ENCODE measurements at regions of chr14 and their contacts with region 1.

Region 1: DNA sequence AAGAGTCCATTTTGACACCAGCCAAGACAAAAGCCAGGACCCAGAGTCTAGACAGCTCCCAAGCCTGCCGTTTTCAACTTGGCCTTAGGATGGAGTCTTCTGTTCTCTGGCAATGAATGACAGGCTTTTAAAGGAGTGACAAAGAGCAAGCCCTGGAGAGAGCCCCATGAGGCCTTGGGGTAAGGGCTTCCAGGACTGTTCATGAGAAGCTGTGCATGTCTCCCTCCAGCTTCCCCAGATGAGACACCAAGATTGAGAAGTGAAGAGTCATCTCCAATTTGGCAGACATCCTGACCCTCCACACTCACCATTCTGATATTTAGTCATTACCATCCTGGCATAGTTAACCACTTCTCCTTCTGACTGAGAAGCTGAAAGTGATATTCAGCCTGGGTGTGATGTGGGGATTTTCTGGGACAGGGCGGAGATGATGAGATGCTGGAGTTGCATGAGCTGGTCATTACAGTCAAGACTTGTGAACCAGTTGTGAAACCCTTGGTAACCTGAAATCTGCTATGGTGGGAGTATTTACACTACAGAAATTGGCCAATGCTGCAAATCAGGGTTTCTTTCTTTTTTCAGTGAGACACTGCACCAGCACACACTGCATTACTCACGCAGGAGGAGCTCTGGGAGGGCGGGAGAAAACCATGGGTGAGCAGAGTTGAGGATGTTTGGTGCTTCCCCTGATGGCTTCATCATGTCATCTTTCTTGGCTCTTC is 77.8 kb downstream of the VCPKMT start:
- DNase-seq: peak; percentile 88
- ATAC-seq: peak; percentile 82
- H3K4me3 Mint-ChIP-seq: peak overlapping the region; percentile 75
- H3K27ac Mint-ChIP-seq: peak overlapping the region; percentile 99
- H3K4me1 Mint-ChIP-seq: peaks cover 66% of the 10 kb centered on the region
- H3K27me3 Mint-ChIP-seq: no peaks in the 10 kb centered on the region

Region 2: DNA sequence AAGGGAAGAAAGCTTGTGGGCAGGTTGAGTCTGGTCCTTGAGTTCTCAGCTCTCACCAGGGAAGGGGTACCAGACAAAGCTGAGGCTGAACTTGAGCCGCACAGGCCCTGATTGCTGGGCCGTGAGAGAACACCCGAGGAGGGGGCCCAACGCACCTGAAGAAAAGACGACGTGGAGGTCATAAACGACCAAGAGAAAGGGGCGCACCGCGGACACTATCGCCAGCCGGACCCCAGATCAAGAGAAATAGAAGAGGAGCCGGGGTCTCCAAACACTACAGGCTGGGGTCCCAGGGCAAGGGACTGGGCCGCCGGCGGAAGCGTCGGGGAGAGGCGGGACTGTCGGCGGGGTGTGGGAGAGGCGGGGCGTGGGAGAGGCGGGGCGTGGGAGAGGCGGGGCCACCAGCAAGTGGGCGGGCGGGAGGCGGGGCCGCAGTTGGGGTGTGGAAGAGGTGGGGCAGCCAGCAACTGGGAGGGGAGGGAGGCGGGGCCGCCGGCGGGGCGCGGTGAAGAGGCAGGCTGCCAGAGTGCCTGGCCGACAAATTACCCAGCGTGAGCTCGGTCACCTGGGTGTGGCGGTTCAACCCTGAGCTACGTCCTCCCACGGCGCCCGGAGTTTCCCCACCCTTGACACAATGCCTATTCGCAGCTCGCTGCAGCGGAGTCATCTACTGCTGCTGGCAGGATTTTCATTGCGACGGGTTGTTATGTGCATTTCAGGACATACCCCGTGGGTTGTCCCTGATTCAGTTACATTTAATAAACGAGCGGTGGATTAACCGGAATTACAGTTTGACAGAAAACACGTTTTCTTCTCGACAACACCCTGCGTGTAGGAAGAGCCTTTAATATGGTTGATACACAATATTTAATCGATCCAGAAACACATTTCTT is 170.5 kb before region 1 on chr14:
- CTCF ChIA-PET with region 1: interaction called, 17 read pairs
- POLR2A ChIA-PET with region 1: interaction called, 27 read pairs
- intact Hi-C with region 1: loop called in 1 of 2 experiments (anchors 1 kb)
- DNase-seq: peak; percentile 100
- ATAC-seq: peak; percentile 87
- H3K4me3 Mint-ChIP-seq: peak overlapping the region; percentile 98
- H3K27ac Mint-ChIP-seq: peak overlapping the region; percentile 96
- H3K4me1 Mint-ChIP-seq: peaks cover 22% of the 10 kb centered on the region
- H3K27me3 Mint-ChIP-seq: no peaks in the 10 kb centered on the region

Region 3: GRCh38 chr14:49971156-49972130 is 67.1 kb before region 1 on chr14:
- CTCF ChIA-PET with region 1: interaction called, 13 read pairs
- POLR2A ChIA-PET with region 1: interaction called, 25 read pairs
- intact Hi-C with region 1: loop called (anchors 1 kb)
- DNase-seq: peak; percentile 77
- ATAC-seq: peak; percentile 66
- H3K4me3 Mint-ChIP-seq: peak overlapping the region; percentile 75
- H3K27ac Mint-ChIP-seq: peak overlapping the region; percentile 98
- H3K4me1 Mint-ChIP-seq: peaks cover 67% of the 10 kb centered on the region
- H3K27me3 Mint-ChIP-seq: no peaks in the 10 kb centered on the region

Region 4: GRCh38 chr14:50060871-50061663 is 22.5 kb after region 1 on chr14:
- CTCF ChIA-PET with region 1: interaction called, 29 read pairs
- POLR2A ChIA-PET with region 1: interaction called, 53 read pairs
- intact Hi-C with region 1: loop called (anchors 1 kb)
- DNase-seq: peak; percentile 65
- ATAC-seq: peak; percentile 6
- H3K4me3 Mint-ChIP-seq: peak overlapping the region; percentile 90
- H3K27ac Mint-ChIP-seq: peak overlapping the region; percentile 100
- H3K4me1 Mint-ChIP-seq: peaks cover 84% of the 10 kb centered on the region
- H3K27me3 Mint-ChIP-seq: no peaks in the 10 kb centered on the region

Region 5: DNA sequence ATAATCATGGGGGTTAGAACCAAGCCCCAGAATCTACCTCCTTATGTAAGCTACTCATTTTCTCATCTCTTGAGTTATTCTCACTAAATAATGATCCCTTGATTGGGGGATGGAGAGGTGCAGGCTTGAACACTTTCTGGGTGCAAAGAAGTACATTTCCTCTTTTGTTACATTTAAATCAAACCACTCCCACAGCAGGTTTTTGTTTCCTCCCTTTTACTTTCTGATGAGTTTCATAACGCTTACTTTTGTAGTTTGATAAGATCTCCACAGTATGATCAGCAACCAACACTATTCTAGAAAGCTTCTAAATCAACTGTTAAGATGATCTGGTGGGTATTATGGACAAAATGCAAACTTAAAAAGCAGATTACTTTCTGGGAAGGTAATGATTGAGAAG is 57.3 kb after region 1 on chr14:
- CTCF ChIA-PET with region 1: interaction called, 11 read pairs
- POLR2A ChIA-PET with region 1: interaction called, 9 read pairs
- intact Hi-C with region 1: loop called in 1 of 2 experiments (anchors 2 kb)
- DNase-seq: no peak
- ATAC-seq: peak; percentile 66
- H3K4me3 Mint-ChIP-seq: peak overlapping the region; percentile 45
- H3K27ac Mint-ChIP-seq: peak overlapping the region; percentile 80
- H3K4me1 Mint-ChIP-seq: peaks cover 73% of the 10 kb centered on the region
- H3K27me3 Mint-ChIP-seq: no peaks in the 10 kb centered on the region

Region 6: GRCh38 chr14:50222061-50222613 is 183.6 kb after region 1 on chr14:
- CTCF ChIA-PET with region 1: no interaction called
- POLR2A ChIA-PET with region 1: no interaction called
- intact Hi-C with region 1: no loop called
- DNase-seq: no peak
- ATAC-seq: no peak
- H3K4me3 Mint-ChIP-seq: no peak overlapping the region
- H3K27ac Mint-ChIP-seq: peak overlapping the region; percentile 5
- H3K4me1 Mint-ChIP-seq: peaks cover 39% of the 10 kb centered on the region
- H3K27me3 Mint-ChIP-seq: no peaks in the 10 kb centered on the region

Region 7: GRCh38 chr14:50520947-50521815 is 482.6 kb after region 1 on chr14:
- CTCF ChIA-PET with region 1: no interaction called
- POLR2A ChIA-PET with region 1: no interaction called
- intact Hi-C with region 1: loop called in 1 of 2 experiments (anchors 1 kb)
- DNase-seq: peak; percentile 84
- ATAC-seq: peak; percentile 81
- H3K4me3 Mint-ChIP-seq: peak overlapping the region; percentile 55
- H3K27ac Mint-ChIP-seq: peak overlapping the region; percentile 94
- H3K4me1 Mint-ChIP-seq: peaks cover 56% of the 10 kb centered on the region
- H3K27me3 Mint-ChIP-seq: no peaks in the 10 kb centered on the region